Left ventricle myocardium inferior (tissue), 1 donor: ENCODE measurements at regions of chr16 and their contacts with region 1.

Region 1: DNA sequence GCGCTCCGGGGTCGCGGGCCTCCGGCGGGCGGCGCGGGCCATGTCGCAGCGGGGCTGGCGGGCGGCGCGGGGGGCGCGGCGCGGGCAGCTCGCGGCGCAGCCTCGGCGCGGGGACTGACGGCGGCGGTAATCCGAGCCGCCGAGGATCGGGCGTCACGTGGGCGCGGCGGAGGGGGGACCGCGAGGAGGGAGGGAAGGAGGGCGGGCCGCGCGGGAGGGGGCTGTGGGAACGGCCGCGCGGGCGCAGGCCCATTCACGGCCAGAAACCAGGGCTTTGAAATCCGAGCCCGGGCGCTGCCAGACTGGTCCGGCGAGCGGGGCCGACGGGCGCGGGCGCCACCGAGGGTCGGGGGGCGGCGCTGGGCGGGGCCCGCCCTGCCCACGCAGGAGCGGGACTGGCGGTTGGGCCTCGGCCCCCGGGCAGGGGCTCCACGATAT is at the start of gene MTSS2:
- DNase-seq: peak; percentile 87
- H3K4me3 ChIP-seq: peak within 1 kb of the TSS; percentile 87
- H3K27ac ChIP-seq: peak within 1 kb of the TSS; percentile 93
- H3K4me1 ChIP-seq: peaks cover 96% of the 10 kb centered on the region
- H3K27me3 ChIP-seq: no peaks in the 10 kb centered on the region
- CTCF ChIP-seq: no peak
- total RNA-seq, gene MTSS2: 83.9 TPM

Region 2: GRCh38 chr16:70454222-70455034 is 231.5 kb before region 1 on chr16 and contains the start of gene FCSK:
- intact Hi-C with region 1: no loop called
- DNase-seq: peak; percentile 61
- H3K4me3 ChIP-seq: peak within 1 kb of the TSS; percentile 99
- H3K27ac ChIP-seq: peak within 1 kb of the TSS; percentile 97
- H3K4me1 ChIP-seq: peaks cover 24% of the 10 kb centered on the region
- H3K27me3 ChIP-seq: peaks cover 4% of the 10 kb centered on the region
- CTCF ChIP-seq: no peak
- total RNA-seq, gene FCSK: 7.4 TPM

Region 3: DNA sequence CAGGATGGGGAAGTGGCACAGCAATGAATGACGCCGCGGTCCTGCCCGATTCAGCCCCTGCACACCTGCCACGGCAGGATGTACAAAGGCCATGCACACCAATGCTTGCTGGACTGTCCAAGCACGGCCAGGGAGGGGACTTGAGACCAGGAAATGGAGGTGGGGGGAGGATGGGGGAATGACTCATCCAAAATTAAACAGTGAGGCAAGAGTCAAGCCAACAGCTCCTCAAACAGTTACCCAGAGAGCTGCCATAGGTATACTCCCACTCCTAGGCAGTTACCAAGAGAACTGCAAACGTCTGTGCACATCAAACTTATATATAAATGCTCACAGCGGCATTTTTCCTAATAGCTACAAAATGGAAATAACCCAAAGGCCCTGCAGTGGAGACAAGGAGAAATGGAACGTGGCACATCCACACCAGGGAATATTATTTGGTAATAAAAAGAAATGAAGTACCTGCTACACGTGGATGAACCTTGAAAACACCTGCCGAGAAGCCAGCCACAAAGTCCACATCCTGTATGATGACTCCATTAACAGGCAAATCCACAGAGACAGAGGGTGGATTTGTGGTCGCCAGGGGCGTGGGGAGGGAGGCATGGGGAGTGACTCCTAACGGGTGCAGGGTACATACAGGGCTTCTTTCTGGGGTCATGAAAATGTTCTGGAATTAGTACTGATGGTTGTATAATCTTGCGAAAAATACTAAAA is 60.9 kb after region 1 on chr16:
- intact Hi-C with region 1: loop called (anchors 10 kb)
- DNase-seq: peak; percentile 50
- H3K4me3 ChIP-seq: no peak overlapping the region
- H3K27ac ChIP-seq: peak overlapping the region; percentile 62
- H3K4me1 ChIP-seq: peaks cover 70% of the 10 kb centered on the region
- H3K27me3 ChIP-seq: no peaks in the 10 kb centered on the region
- CTCF ChIP-seq: no peak